Motor neuron (in vitro differentiated cells): ENCODE measurements at regions of chr16 and their contacts with region 1.

Region 1: GRCh38 chr16:87062569-87063442 is 254.4 kb downstream of the C16orf95 start:
- ATAC-seq: peak; percentile 76 to 93 (median 86)
- H3K4me3 ChIP-seq: no peak overlapping the region
- H3K27ac ChIP-seq: no peak overlapping the region
- H3K4me1 ChIP-seq: peaks cover 23 to 30% of the 10 kb centered on the region in 2 donors

Region 2: DNA sequence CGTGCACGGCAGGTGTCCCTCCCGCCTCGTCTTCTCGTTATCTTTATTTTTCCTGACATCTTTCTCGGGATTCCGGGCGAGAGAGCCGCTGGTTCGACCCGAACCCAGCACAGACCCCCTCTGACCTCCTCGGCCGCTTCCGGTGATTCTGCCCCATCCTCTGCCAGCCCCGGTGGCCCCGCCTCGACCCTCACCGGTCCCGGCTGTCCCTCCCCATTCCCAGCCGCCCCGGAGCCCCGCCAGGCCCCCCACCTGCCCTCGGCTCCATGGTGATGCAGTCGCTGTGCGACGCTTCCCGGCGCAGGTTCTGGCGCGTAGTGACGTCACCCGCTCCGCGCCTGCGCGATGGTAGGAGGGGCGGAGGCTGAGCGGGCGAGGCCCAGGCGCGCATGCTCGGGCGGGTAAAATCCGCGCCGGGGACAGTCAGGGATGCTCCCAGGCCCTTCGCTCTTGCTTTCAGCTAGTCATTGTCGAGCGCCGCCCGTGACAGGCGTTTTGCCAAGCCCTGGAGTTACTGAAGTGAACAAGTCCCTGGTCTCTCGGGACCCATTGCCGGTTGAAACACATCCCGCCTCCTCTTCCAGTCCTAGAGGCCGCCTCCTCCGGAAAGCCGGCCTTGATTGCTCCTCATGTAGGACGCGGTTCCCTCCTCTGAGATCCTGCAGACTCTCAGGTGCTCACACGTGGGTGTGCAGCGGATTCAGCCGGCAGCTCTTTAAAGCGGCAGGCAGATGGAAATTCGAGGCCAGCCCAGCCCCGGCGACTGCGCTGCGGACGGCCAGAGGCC is 507.7 kb before region 1 on chr16 and contains the start of gene MTHFSD:
- in situ Hi-C with region 1: loop called (anchors 10 to 25 kb)
- ATAC-seq: peak; percentile 85 to 94 (median 90)
- H3K4me3 ChIP-seq: peak within 1 kb of the TSS; percentile 65 to 95 (median 73)
- H3K27ac ChIP-seq: peak within 1 kb of the TSS; percentile 66 to 84
- H3K4me1 ChIP-seq: peaks cover 13 to 16% of the 10 kb centered on the region in 2 donors
- total RNA-seq, gene MTHFSD: 10.4 to 36.4 (median 19.4) TPM

Region 3: GRCh38 chr16:86761111-86762031 is 301.4 kb before region 1 on chr16:
- in situ Hi-C with region 1: loop called in 1 of 9 experiments (anchors 25 kb)
- ATAC-seq: peak; percentile 55 to 94 (median 82)
- H3K4me3 ChIP-seq: no peak overlapping the region
- H3K27ac ChIP-seq: no peak overlapping the region
- H3K4me1 ChIP-seq: peaks cover 12% of the 10 kb centered on the region in 2 donors

Region 4: GRCh38 chr16:87160234-87160661 is 97.4 kb after region 1 on chr16:
- in situ Hi-C with region 1: no loop called
- ATAC-seq: peak; percentile 49 to 93 (median 83)
- H3K4me3 ChIP-seq: no peak overlapping the region
- H3K27ac ChIP-seq: peak overlapping the region; percentile 4 to 62
- H3K4me1 ChIP-seq: peaks cover 5 to 8% of the 10 kb centered on the region in 2 donors

Region 5: DNA sequence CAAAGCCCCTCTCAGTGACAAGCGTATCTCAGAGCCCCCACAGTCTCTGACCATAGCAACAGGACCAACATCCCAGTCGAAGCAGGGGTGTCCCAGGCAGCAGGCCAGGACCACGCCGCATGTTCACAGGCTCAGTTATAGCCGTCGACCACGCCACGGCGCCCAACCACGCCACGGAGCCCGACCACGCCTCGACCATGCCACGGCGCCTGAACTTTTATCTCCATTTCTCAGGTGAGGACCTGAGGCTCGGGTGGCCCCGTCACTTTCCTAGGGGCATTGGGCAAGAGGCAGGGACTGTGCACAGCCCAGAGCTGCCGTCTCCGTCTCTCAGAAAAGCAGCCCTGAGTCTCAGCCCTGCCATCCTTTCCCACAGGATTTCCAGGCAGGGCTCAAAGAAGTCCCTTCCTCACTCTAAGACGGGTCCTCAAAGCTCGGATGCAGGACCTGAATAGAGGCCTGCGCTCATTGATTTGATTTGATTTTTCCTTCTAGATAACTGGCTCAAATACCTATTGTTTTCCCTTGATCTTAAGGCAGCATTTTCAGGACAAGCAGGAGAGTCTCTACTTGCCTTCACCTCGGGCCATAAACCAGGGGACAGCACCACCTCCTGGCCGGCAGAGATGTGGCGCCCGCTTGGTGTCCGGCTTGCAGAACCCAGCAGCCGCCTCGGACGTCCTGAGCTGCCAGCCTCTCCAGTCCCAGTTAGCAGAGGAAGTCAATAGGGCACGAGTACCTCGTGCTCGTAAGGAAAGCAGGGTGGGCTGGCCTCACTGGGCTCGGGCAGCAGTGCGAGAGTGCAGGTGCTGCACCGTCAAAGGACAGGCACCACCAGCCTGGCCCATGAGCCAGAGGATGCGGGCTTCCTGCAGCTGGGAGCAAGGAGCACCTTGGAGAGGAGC is 215.6 kb after region 1 on chr16:
- in situ Hi-C with region 1: loop called in 3 of 9 experiments (anchors 25 kb)
- ATAC-seq: peak; percentile 92 to 99 (median 97)
- H3K4me3 ChIP-seq: no peak overlapping the region
- H3K27ac ChIP-seq: no peak overlapping the region
- H3K4me1 ChIP-seq: peaks cover 10 to 11% of the 10 kb centered on the region in 2 donors